RWPE1 (cell line): ENCODE measurements at regions of chr11 and their contacts with region 1.

Region 1: GRCh38 chr11:79400717-79401686 is 39.8 kb downstream of the TENM4 start:
- DNase-seq: peak; percentile 48
- H3K27ac ChIP-seq: no peak overlapping the region
- CTCF ChIP-seq: no peak

Region 2: DNA sequence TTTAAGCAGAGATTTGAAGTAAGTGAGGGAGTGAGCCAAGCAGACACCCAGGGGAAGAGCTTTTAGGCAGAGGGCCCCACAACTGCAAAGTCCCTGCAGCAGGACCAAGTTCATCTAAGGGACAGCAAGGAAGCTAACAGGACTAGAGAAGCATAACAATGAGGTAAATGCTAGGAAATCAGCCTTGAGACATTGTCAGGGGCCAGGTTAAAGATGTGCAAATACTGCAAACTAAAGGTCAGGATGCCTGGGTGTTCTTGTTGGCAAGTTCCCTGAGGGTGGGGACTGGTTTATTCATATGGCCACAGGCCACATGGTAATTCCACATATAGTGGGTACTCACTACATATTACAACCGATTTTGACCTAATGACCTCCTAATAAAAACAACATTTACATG is 427.1 kb before region 1 on chr11:
- CTCF ChIA-PET with region 1: no interaction called
- POLR2A ChIA-PET with region 1: no interaction called
- DNase-seq: no peak
- H3K27ac ChIP-seq: no peak overlapping the region
- CTCF ChIP-seq: no peak

Region 3: GRCh38 chr11:79274636-79275331 is 126.2 kb before region 1 on chr11:
- CTCF ChIA-PET with region 1: no interaction called
- POLR2A ChIA-PET with region 1: no interaction called
- DNase-seq: no peak
- H3K27ac ChIP-seq: peak overlapping the region; percentile 38
- CTCF ChIP-seq: no peak

Region 4: GRCh38 chr11:79314906-79315681 is 85.9 kb before region 1 on chr11:
- CTCF ChIA-PET with region 1: no interaction called
- POLR2A ChIA-PET with region 1: no interaction called
- DNase-seq: peak; percentile 9
- H3K27ac ChIP-seq: no peak overlapping the region
- CTCF ChIP-seq: no peak

Region 5: DNA sequence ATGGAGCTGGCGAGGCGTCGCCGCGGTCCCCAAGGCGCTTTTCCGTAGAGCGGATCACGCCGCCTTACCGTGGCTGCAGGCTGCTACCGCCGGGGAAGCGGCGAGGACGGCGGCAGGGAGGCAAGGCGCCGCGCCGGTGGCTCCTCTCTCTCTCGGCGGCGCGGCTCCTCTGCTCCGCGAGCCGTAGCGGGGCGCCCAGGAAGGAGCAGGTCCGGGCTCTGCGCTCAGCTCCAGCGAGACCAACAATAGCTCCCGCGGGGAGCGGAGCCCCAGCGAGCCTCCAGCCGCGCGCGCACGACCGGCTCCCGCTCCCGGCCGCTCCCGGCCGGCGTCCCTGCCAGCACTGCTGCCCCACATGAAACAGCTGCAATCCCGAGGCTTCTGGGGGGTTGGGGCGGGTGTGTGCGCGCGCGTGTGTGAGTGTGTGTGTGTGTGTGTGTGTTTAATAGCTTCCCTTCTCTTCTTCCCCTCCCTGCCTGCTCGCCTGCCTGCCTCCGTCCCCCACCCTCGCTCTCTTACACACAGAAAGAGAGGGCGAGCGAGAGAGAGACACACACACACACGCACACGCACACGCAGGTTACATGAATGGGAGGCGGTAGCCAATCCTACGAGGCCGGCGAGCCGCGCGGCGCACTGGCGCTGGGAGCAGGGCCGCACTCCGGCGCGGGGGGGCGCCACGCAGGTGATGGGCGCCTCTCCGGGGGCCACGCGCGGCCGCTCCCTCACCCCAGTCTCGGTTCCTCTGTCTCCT is 39.6 kb after region 1 on chr11 and contains the start of gene TENM4:
- CTCF ChIA-PET with region 1: interaction called, 21 read pairs
- POLR2A ChIA-PET with region 1: no interaction called
- DNase-seq: peak; percentile 55
- H3K27ac ChIP-seq: peak within 1 kb of the TSS; percentile 99
- CTCF ChIP-seq: peak; percentile 85

Region 6: GRCh38 chr11:79493555-79494171 is 92.7 kb after region 1 on chr11:
- CTCF ChIA-PET with region 1: interaction called, 19 read pairs
- POLR2A ChIA-PET with region 1: no interaction called
- DNase-seq: peak; percentile 76
- H3K27ac ChIP-seq: no peak overlapping the region
- CTCF ChIP-seq: peak; percentile 90

Region 7: GRCh38 chr11:80758787-80759186 is 1357.8 kb after region 1 on chr11:
- CTCF ChIA-PET with region 1: no interaction called
- POLR2A ChIA-PET with region 1: no interaction called
- DNase-seq: no peak
- H3K27ac ChIP-seq: no peak overlapping the region
- CTCF ChIP-seq: no peak